Activated CD4-positive, alpha-beta T cell treated with anti-CD3 and anti-CD28 coated beads for 36 hours (primary cell): ENCODE measurements at regions of chr14 and their contacts with region 1.

Region 1: GRCh38 chr14:49497725-49498348 is 88.3 kb downstream of the RPS29 start:
- DNase-seq: peak; percentile 30
- ATAC-seq: peak; percentile 71
- H3K4me3 Mint-ChIP-seq: no peak overlapping the region
- H3K27ac Mint-ChIP-seq: no peak overlapping the region
- H3K4me1 Mint-ChIP-seq: no peaks in the 10 kb centered on the region
- H3K27me3 Mint-ChIP-seq: peaks cover 9% of the 10 kb centered on the region

Region 2: GRCh38 chr14:49306152-49306751 is 191.6 kb before region 1 on chr14:
- CTCF ChIA-PET with region 1: no interaction called
- POLR2A ChIA-PET with region 1: no interaction called
- intact Hi-C with region 1: loop called in 1 of 2 experiments (anchors 5 kb)
- DNase-seq: no peak
- ATAC-seq: peak; percentile 61
- H3K4me3 Mint-ChIP-seq: no peak overlapping the region
- H3K27ac Mint-ChIP-seq: no peak overlapping the region
- H3K4me1 Mint-ChIP-seq: peaks cover 3% of the 10 kb centered on the region
- H3K27me3 Mint-ChIP-seq: peaks cover 7% of the 10 kb centered on the region

Region 3: DNA sequence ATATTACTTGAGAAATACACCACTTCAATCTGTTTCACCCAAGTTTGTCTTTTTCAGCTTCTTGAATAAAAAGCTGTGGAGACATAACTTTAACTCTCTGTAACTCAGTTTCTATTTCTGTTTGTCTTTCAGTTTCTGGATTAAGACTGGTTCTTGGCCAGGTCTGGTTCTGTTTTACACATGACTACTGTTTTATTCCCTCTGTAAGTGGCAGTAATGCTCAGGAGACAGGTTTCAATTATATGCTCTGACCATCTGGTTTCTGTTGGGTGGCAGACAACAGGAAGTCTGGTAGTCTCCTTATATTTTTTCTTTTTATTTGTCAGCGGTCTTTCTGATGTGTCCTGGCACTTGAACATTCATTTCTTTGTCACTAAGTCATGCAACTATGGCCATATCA is 14.6 kb before region 1 on chr14:
- CTCF ChIA-PET with region 1: interaction called, 39 read pairs
- POLR2A ChIA-PET with region 1: no interaction called
- intact Hi-C with region 1: no loop called
- DNase-seq: no peak
- ATAC-seq: peak; percentile 85
- H3K4me3 Mint-ChIP-seq: no peak overlapping the region
- H3K27ac Mint-ChIP-seq: peak overlapping the region; percentile 13
- H3K4me1 Mint-ChIP-seq: peaks cover 7% of the 10 kb centered on the region
- H3K27me3 Mint-ChIP-seq: peaks cover 3% of the 10 kb centered on the region